Gastrocnemius medialis (tissue), 4 donors: ENCODE measurements at regions of chr7 and their contacts with region 1.

Region 1: DNA sequence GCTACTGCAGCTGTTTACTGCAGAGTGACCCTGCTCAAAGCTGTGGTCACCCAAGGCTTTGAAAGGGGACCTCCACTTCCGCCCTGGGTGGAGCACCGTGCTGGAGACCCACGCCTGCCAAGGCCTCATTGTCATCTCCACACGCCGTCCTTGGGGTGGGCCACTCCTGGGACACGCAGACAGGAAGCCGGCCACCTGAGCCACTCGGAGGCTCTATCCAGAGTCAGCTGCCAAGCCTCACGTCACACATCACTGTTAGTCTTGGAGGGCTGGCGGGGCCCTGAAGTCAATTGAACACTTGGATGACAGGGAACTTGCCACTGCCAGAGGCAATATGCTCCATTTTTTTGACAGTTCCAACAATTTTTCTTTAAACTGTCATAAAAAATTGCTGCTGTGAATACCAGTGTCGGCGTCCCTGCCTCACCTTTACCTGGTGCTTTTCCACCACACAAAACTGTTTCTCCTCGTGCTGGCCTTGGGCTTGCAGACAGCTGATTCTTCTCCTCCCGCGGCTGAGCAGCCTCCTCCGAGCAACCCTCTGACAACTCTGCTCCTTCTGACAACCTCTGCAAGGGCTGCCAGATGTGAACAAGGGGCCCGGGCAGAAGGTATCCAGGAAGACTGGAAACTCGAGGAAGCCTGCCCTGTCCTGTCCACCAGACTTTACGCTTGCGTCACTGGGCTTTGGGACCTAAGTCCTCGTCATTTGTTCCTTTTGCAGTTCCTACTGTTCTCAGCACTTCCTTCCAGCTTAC is 81.9 kb downstream of the EGFR start:
- DNase-seq: peak; percentile 66 to 83
- ATAC-seq: peak; percentile 53 to 65
- H3K4me3 ChIP-seq: peak overlapping the region in 1 of 4 donors; percentile 12
- H3K27ac ChIP-seq: peak overlapping the region; percentile 77 to 80 (median 79)
- H3K4me1 ChIP-seq: peaks cover 29 to 46% of the 10 kb centered on the region in 2 donors
- H3K27me3 ChIP-seq: no peaks in the 10 kb centered on the region
- CTCF ChIP-seq: no peak
- POLR2A ChIP-seq: peak; percentile 6 to 39

Region 2: GRCh38 chr7:55005241-55005851 is 95.4 kb before region 1 on chr7:
- in situ Hi-C with region 1: no loop called
- intact Hi-C with region 1: no loop called
- DNase-seq: no peak
- ATAC-seq: no peak
- H3K4me3 ChIP-seq: no peak overlapping the region
- H3K27ac ChIP-seq: no peak overlapping the region
- H3K4me1 ChIP-seq: no peaks in the 10 kb centered on the region
- H3K27me3 ChIP-seq: no peaks in the 10 kb centered on the region
- CTCF ChIP-seq: no peak
- POLR2A ChIP-seq: no peak

Region 3: GRCh38 chr7:55073945-55074499 is 26.7 kb before region 1 on chr7:
- in situ Hi-C with region 1: no loop called
- intact Hi-C with region 1: loop called (anchors 2 kb)
- DNase-seq: peak in 1 of 2 donors; percentile 60
- ATAC-seq: peak in 1 of 2 donors; percentile 14
- H3K4me3 ChIP-seq: no peak overlapping the region
- H3K27ac ChIP-seq: peak overlapping the region; percentile 72 to 84 (median 79)
- H3K4me1 ChIP-seq: peaks cover 42 to 52% of the 10 kb centered on the region in 2 donors
- H3K27me3 ChIP-seq: no peaks in the 10 kb centered on the region
- CTCF ChIP-seq: no peak
- POLR2A ChIP-seq: peak in 1 of 2 donors; percentile 28

Region 4: GRCh38 chr7:55304018-55304762 is 203.5 kb after region 1 on chr7:
- in situ Hi-C with region 1: no loop called
- intact Hi-C with region 1: no loop called
- DNase-seq: no peak
- ATAC-seq: no peak
- H3K4me3 ChIP-seq: no peak overlapping the region
- H3K27ac ChIP-seq: no peak overlapping the region
- H3K4me1 ChIP-seq: peaks cover 0 to 5% of the 10 kb centered on the region in 2 donors
- H3K27me3 ChIP-seq: no peaks in the 10 kb centered on the region
- CTCF ChIP-seq: no peak
- POLR2A ChIP-seq: no peak